ENCODE measurements at regions of chr5 and their contacts with region 1.

Region 1: GRCh38 chr5:177113566-177114424 is 19.8 kb upstream of the NSD1 start:
- DNase-seq: peak; percentile 68 to 89 (median 79)
- ATAC-seq: peak; percentile 68
- H3K4me3 ChIP-seq: no peak overlapping the region
- H3K4me3 Mint-ChIP-seq: no peak overlapping the region
- H3K27ac ChIP-seq: no peak overlapping the region
- H3K27ac Mint-ChIP-seq: no peak overlapping the region
- H3K4me1 ChIP-seq: peaks cover 14% of the 10 kb centered on the region
- H3K4me1 Mint-ChIP-seq: peaks cover 16% of the 10 kb centered on the region
- H3K27me3 ChIP-seq: no peaks in the 10 kb centered on the region
- H3K27me3 Mint-ChIP-seq: no peaks in the 10 kb centered on the region
- CTCF ChIP-seq: peak; percentile 99

Region 2: GRCh38 chr5:175729829-175730277 is 1383.9 kb before region 1 on chr5:
- CTCF ChIA-PET with region 1: interaction called, 3 read pairs
- POLR2A ChIA-PET with region 1: no interaction called
- intact Hi-C with region 1: loop called in 1 of 2 experiments (anchors 2 kb)
- DNase-seq: peak; percentile 86 to 97 (median 89)
- ATAC-seq: peak; percentile 86
- H3K4me3 ChIP-seq: no peak overlapping the region
- H3K4me3 Mint-ChIP-seq: no peak overlapping the region
- H3K27ac ChIP-seq: no peak overlapping the region
- H3K27ac Mint-ChIP-seq: no peak overlapping the region
- H3K4me1 ChIP-seq: peaks cover 7% of the 10 kb centered on the region
- H3K4me1 Mint-ChIP-seq: peaks cover 8% of the 10 kb centered on the region
- H3K27me3 ChIP-seq: peaks cover 2 to 6% of the 10 kb centered on the region in 2 experiments
- H3K27me3 Mint-ChIP-seq: peaks cover 26% of the 10 kb centered on the region
- CTCF ChIP-seq: peak; percentile 91

Region 3: DNA sequence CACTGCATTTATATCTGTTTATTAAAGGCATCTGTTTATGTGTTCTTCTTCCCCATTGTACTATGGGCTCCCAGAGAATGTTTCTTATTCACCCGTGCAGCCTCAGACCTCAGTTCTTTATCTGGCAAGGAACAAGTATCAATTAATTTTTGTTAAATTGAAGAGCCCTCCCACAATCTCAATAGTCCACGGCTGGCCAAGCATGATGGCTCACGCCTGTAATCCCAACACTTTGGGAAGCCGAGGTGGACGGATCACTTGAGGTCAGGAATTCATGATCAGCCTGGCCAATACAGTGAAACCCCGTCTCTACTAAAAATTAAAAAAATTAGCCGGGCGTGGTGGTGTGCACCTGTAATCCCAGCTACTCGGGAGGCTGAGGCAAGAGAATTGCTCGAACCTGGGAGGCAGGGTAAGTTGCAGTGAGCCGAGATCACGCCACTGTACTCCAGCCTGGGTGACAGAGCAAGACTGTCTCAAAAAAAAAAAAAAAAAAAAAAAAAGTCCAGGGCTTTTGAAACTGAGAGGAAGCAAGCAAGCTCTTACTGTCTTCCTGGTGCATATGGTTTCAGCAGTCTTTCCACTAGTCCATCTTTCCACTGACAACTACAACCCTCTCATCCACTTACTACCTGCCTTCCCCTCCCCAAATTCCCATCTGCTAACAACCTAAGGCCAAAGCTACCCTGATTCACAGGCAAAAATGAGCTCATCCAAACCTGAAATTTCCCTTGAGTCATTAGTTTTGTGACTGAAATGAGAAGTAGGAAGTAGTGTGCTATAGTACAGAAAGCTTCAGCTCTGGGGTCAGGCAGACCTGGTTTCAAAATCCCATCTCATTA is 212.3 kb before region 1 on chr5:
- CTCF ChIA-PET with region 1: no interaction called
- POLR2A ChIA-PET with region 1: no interaction called
- intact Hi-C with region 1: no loop called
- DNase-seq: peak in 1 of 9 experiments; percentile 24
- ATAC-seq: no peak
- H3K4me3 ChIP-seq: no peak overlapping the region
- H3K4me3 Mint-ChIP-seq: no peak overlapping the region
- H3K27ac ChIP-seq: no peak overlapping the region
- H3K27ac Mint-ChIP-seq: peak overlapping the region; percentile 53
- H3K4me1 ChIP-seq: peaks cover 9% of the 10 kb centered on the region
- H3K4me1 Mint-ChIP-seq: peaks cover 13% of the 10 kb centered on the region
- H3K27me3 ChIP-seq: no peaks in the 10 kb centered on the region
- H3K27me3 Mint-ChIP-seq: no peaks in the 10 kb centered on the region
- CTCF ChIP-seq: no peak

Region 4: GRCh38 chr5:177086924-177087706 is 26.7 kb before region 1 on chr5:
- CTCF ChIA-PET with region 1: interaction called, 34 read pairs
- POLR2A ChIA-PET with region 1: no interaction called
- intact Hi-C with region 1: no loop called
- DNase-seq: peak; percentile 35 to 83 (median 70)
- ATAC-seq: peak; percentile 82
- H3K4me3 ChIP-seq: peak overlapping the region; percentile 43 to 49
- H3K4me3 Mint-ChIP-seq: peak overlapping the region; percentile 49
- H3K27ac ChIP-seq: no peak overlapping the region
- H3K27ac Mint-ChIP-seq: no peak overlapping the region
- H3K4me1 ChIP-seq: peaks cover 10% of the 10 kb centered on the region
- H3K4me1 Mint-ChIP-seq: peaks cover 8% of the 10 kb centered on the region
- H3K27me3 ChIP-seq: peaks cover 0 to 2% of the 10 kb centered on the region in 2 experiments
- H3K27me3 Mint-ChIP-seq: peaks cover 20% of the 10 kb centered on the region
- CTCF ChIP-seq: peak; percentile 74

Region 5: GRCh38 chr5:177183142-177183541 is 69.3 kb after region 1 on chr5:
- CTCF ChIA-PET with region 1: interaction called, 6 read pairs
- POLR2A ChIA-PET with region 1: no interaction called
- intact Hi-C with region 1: loop called in 1 of 2 experiments (anchors 5 kb)
- DNase-seq: no peak
- ATAC-seq: no peak
- H3K4me3 ChIP-seq: no peak overlapping the region
- H3K4me3 Mint-ChIP-seq: no peak overlapping the region
- H3K27ac ChIP-seq: no peak overlapping the region
- H3K27ac Mint-ChIP-seq: no peak overlapping the region
- H3K4me1 ChIP-seq: peaks cover 6% of the 10 kb centered on the region
- H3K4me1 Mint-ChIP-seq: peaks cover 49% of the 10 kb centered on the region
- H3K27me3 ChIP-seq: no peaks in the 10 kb centered on the region
- H3K27me3 Mint-ChIP-seq: no peaks in the 10 kb centered on the region
- CTCF ChIP-seq: no peak

Region 6: GRCh38 chr5:177233206-177233605 is 119.4 kb after region 1 on chr5:
- CTCF ChIA-PET with region 1: interaction called, 28 read pairs
- POLR2A ChIA-PET with region 1: no interaction called
- intact Hi-C with region 1: loop called in 1 of 2 experiments (anchors 5 kb)
- DNase-seq: no peak
- ATAC-seq: no peak
- H3K4me3 ChIP-seq: no peak overlapping the region
- H3K4me3 Mint-ChIP-seq: no peak overlapping the region
- H3K27ac ChIP-seq: no peak overlapping the region
- H3K27ac Mint-ChIP-seq: peak overlapping the region; percentile 41
- H3K4me1 ChIP-seq: no peaks in the 10 kb centered on the region
- H3K4me1 Mint-ChIP-seq: peaks cover 30% of the 10 kb centered on the region
- H3K27me3 ChIP-seq: no peaks in the 10 kb centered on the region
- H3K27me3 Mint-ChIP-seq: no peaks in the 10 kb centered on the region
- CTCF ChIP-seq: no peak

Region 7: DNA sequence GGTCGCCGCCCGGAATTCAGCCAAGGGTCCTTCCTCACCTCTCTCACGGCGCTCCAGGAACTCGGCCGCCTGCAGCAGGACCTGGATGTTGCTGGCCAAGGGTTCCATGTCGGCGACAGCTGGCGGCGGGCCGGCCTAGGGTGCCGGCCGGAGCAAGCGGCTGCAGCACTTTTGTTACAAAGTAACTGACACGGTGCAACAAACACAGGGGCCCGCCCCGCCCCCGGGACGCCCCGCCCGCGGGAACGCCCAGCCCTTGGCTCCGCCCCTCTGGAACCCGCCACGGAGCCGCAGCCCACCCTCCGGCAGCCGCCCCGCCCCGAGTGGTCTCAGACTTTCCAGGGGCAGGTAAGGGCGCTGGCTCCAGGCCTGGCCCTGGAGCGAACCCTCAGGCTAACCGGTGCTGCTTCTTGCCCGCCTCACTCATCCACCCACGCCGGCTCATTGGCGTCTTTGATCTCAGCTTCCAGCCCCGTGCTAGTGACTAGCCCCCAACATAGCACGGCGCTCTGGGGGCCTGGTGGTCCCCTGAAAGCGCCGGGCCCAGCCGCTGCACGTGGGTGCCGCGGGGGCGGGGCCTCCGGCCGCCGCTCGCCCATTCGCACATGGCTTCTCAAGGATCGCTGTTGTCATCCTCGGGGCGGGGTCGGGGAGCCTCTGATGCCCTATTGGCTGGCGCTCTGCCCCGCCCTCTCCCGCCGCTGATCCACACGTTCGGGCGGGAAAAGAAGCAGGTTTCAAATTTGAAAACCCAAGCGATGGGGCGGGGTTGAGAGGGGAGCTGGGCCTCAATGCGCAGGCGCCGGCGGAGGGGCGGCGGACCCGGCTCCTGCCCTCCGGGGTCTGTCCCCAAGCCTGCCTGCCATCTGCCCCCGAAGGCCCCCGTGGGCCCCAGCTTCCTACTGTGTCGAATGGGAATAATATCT is 198.2 kb after region 1 on chr5 and contains the start of gene MXD3:
- CTCF ChIA-PET with region 1: interaction called, 23 read pairs
- POLR2A ChIA-PET with region 1: no interaction called
- intact Hi-C with region 1: no loop called
- DNase-seq: peak; percentile 88 to 96 (median 94)
- ATAC-seq: peak; percentile 91
- H3K4me3 ChIP-seq: peak within 1 kb of the TSS; percentile 63 to 79
- H3K4me3 Mint-ChIP-seq: peak within 1 kb of the TSS; percentile 80
- H3K27ac ChIP-seq: peak within 1 kb of the TSS in 1 of 2 experiments; percentile 58
- H3K27ac Mint-ChIP-seq: peak within 1 kb of the TSS; percentile 49
- H3K4me1 ChIP-seq: peaks cover 36% of the 10 kb centered on the region
- H3K4me1 Mint-ChIP-seq: peaks cover 25% of the 10 kb centered on the region
- H3K27me3 ChIP-seq: no peaks in the 10 kb centered on the region
- H3K27me3 Mint-ChIP-seq: peaks cover 2% of the 10 kb centered on the region
- CTCF ChIP-seq: no peak
- total RNA-seq, gene MXD3: 6.2 to 8.5 TPM

Region 8: GRCh38 chr5:177497292-177498033 is 383.7 kb after region 1 on chr5 and contains the start of gene PDLIM7:
- CTCF ChIA-PET with region 1: no interaction called
- POLR2A ChIA-PET with region 1: no interaction called
- intact Hi-C with region 1: loop called in 1 of 2 experiments (anchors 2 kb)
- DNase-seq: peak; percentile 88 to 97 (median 93)
- ATAC-seq: peak; percentile 88
- H3K4me3 ChIP-seq: peak within 1 kb of the TSS; percentile 64 to 80
- H3K4me3 Mint-ChIP-seq: peak within 1 kb of the TSS; percentile 82
- H3K27ac ChIP-seq: peak within 1 kb of the TSS; percentile 18 to 20
- H3K27ac Mint-ChIP-seq: no peak within 1 kb of the TSS
- H3K4me1 ChIP-seq: peaks cover 27% of the 10 kb centered on the region
- H3K4me1 Mint-ChIP-seq: peaks cover 30% of the 10 kb centered on the region
- H3K27me3 ChIP-seq: no peaks in the 10 kb centered on the region
- H3K27me3 Mint-ChIP-seq: no peaks in the 10 kb centered on the region
- CTCF ChIP-seq: no peak
- total RNA-seq, gene PDLIM7: 6.6 to 7.1 TPM